ENCODE measurements at regions of chr1 and their contacts with region 1.

Region 1: DNA sequence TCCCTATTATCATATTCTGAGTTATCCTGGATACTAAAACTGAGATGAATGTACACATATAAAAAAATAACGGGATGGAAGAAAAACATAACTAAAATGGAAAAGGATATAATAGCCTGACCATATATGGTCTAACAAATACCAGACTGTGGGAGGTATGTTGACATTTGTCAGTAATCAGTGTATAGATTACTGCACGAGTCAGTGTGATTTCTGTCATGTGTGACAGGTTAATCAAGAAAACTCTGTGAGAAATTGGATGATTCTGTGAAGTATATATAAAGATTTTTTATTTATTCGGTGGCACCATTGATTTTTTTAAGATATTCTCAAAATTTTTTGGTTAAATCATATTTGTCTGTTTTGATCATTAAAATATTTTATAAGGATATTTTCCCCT is 547.3 kb upstream of the B3GALT2 start:
- DNase-seq: no peak
- H3K4me3 ChIP-seq: no peak overlapping the region
- H3K27ac ChIP-seq: no peak overlapping the region
- H3K4me1 ChIP-seq: no peaks in the 10 kb centered on the region
- H3K27me3 ChIP-seq: no peaks in the 10 kb centered on the region
- CTCF ChIP-seq: no peak
- EP300 ChIP-seq: no peak
- POLR2A ChIP-seq: no peak

Region 2: GRCh38 chr1:193201021-193201420 is 532.7 kb before region 1 on chr1:
- in situ Hi-C with region 1: no loop called
- intact Hi-C with region 1: no loop called
- DNase-seq: no peak
- H3K4me3 ChIP-seq: no peak overlapping the region
- H3K27ac ChIP-seq: no peak overlapping the region
- H3K4me1 ChIP-seq: peaks cover 0 to 16% (median 4%) of the 10 kb centered on the region in 4 donors
- H3K27me3 ChIP-seq: no peaks in the 10 kb centered on the region
- CTCF ChIP-seq: no peak
- EP300 ChIP-seq: no peak
- POLR2A ChIP-seq: no peak

Region 3: DNA sequence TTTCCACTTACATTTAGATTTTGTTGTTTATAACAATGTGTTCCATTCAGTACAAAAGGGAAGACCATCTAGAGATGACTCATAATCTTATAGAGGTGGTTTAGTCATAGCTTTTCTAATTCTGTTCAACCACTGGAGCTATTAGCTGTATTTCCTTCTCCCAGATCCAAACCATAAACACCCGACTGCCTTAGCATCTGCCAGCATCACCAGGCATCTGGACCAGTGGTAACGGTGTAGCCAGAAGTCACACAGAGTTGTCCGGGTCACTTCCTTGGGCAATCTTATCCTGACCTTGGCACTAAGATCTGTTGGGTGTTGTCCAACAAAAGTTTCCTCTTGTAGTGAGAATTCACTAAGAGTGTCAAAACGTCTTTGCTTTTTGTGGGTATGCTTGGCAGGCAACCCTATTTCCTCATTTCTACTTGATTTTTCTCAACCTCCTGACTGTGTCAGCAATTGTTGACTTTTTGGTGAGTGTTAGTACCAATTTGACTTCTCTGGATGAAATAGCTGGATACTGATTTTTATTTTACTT is 175.1 kb before region 1 on chr1:
- in situ Hi-C with region 1: no loop called
- intact Hi-C with region 1: no loop called
- DNase-seq: no peak
- H3K4me3 ChIP-seq: no peak overlapping the region
- H3K27ac ChIP-seq: no peak overlapping the region
- H3K4me1 ChIP-seq: no peaks in the 10 kb centered on the region
- H3K27me3 ChIP-seq: no peaks in the 10 kb centered on the region
- CTCF ChIP-seq: no peak
- EP300 ChIP-seq: no peak
- POLR2A ChIP-seq: no peak

Region 4: GRCh38 chr1:193674292-193674944 is 59.3 kb before region 1 on chr1:
- in situ Hi-C with region 1: no loop called
- intact Hi-C with region 1: loop called (anchors 2 kb)
- DNase-seq: no peak
- H3K4me3 ChIP-seq: no peak overlapping the region
- H3K27ac ChIP-seq: peak overlapping the region in 2 of 4 donors; percentile 10 to 42
- H3K4me1 ChIP-seq: peaks cover 0 to 17% (median 4%) of the 10 kb centered on the region in 4 donors
- H3K27me3 ChIP-seq: no peaks in the 10 kb centered on the region
- CTCF ChIP-seq: no peak
- EP300 ChIP-seq: no peak
- POLR2A ChIP-seq: no peak

Measured in transverse colon (tissue), 4 donors.